ENCODE measurements at regions of chr20 and their contacts with region 1.

Region 1: GRCh38 chr20:1357921-1358671 is 29.2 kb upstream of the SDCBP2 start:
- DNase-seq: no peak
- H3K4me3 ChIP-seq: no peak overlapping the region
- H3K27ac ChIP-seq: no peak overlapping the region
- H3K4me1 ChIP-seq: no peaks in the 10 kb centered on the region
- H3K27me3 ChIP-seq: no peaks in the 10 kb centered on the region
- CTCF ChIP-seq: no peak

Region 2: GRCh38 chr20:1331101-1331500 is 27.0 kb before region 1 on chr20:
- CTCF ChIA-PET with region 1: no interaction called
- POLR2A ChIA-PET with region 1: interaction called, 12 read pairs
- intact Hi-C with region 1: no loop called
- DNase-seq: no peak
- H3K4me3 ChIP-seq: no peak overlapping the region
- H3K27ac ChIP-seq: no peak overlapping the region
- H3K4me1 ChIP-seq: peaks cover 48% of the 10 kb centered on the region
- H3K27me3 ChIP-seq: no peaks in the 10 kb centered on the region
- CTCF ChIP-seq: no peak

Region 3: DNA sequence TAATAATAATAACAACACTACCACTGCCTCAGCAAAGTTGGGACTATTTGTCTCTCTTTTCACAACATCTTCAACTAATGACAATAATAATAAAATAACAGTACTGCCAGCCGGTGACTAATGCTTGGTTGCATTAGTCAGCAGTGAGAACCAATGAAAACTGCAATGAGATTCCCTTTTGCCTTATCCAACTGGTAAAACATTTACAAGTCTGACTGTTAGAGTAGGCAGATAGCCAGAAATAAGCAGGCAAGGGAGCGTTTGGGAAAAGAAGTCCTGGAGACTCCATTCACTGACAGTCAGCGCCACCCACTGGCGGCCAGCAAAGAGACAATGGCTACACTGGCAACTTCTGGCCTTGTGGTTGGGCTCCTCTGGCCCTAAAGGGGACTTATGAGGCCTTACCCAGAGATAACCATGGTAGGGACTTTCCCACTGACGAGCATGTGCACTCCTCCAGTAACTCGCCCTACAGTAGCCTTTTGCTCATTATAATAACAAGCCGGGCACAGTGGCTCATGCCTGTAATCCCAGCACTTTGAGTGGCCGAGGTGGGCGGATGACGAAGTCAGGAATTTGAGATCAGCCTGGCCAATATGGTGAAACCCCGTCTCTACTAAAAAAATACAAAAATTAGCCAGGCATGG is 112.0 kb after region 1 on chr20:
- CTCF ChIA-PET with region 1: no interaction called
- POLR2A ChIA-PET with region 1: no interaction called
- intact Hi-C with region 1: no loop called
- DNase-seq: peak; percentile 91 to 93
- H3K4me3 ChIP-seq: no peak overlapping the region
- H3K27ac ChIP-seq: peak overlapping the region; percentile 57
- H3K4me1 ChIP-seq: peaks cover 40% of the 10 kb centered on the region
- H3K27me3 ChIP-seq: no peaks in the 10 kb centered on the region
- CTCF ChIP-seq: peak; percentile 75

Measured in PC-9 (cell line).